Naive thymus-derived CD4-positive, alpha-beta T cell (primary cell): ENCODE measurements at regions of chr12 and their contacts with region 1.

Region 1: DNA sequence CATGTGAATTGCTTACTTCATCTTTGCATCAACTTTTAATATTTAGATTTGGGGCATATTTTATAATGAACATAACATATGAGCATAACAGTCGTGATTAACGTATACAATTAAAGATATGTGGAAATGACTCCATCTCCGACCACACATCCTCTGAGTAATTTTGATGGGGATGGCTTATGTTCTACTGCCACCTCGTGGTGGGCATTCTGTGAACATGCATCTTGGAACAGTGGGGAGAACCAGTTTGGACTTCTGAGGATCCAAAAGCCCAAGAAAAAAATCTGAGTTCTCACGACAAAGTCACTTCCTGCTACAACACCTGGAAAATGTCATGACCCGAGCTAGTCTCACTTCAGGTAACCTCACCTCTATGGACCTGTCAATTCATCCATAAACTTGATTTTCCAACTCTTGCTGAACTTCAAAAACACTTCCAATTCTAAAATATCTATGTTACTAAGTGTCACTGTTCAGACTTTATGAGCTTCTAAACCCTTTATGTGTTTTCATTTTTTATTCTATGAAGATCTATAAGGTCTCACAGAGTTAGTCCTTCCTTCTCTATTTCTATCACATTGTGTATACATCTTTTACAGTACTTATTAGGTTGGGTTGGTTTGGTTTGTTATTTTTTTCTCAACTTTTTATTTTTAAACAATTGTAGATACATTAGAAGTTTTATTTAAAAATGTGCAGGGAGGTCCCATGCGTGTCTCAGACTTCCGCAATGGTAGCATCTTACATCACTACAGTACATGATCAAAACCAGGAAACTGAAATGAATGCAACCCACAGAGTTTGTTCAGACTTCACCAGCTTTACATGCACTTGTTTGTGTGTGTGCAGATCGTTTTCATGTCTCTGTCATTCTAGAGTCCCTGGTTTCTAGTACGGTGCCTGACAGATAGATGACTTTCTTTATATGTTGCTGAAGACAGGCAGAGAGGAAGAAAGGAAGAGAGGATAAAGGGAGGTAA is 38.2 kb upstream of the STAB2 start:
- DNase-seq: peak; percentile 28 to 71 (median 60)
- ATAC-seq: peak; percentile 74
- H3K4me3 ChIP-seq: no peak overlapping the region
- H3K4me3 Mint-ChIP-seq: no peak overlapping the region
- H3K27ac ChIP-seq: no peak overlapping the region
- H3K27ac Mint-ChIP-seq: no peak overlapping the region
- H3K4me1 ChIP-seq: no peaks in the 10 kb centered on the region
- H3K4me1 Mint-ChIP-seq: peaks cover 0 to 5% (median 0%) of the 10 kb centered on the region in 7 donors
- H3K27me3 ChIP-seq: no peaks in the 10 kb centered on the region
- H3K27me3 Mint-ChIP-seq: peaks cover 11 to 35% (median 20%) of the 10 kb centered on the region in 5 donors

Region 2: DNA sequence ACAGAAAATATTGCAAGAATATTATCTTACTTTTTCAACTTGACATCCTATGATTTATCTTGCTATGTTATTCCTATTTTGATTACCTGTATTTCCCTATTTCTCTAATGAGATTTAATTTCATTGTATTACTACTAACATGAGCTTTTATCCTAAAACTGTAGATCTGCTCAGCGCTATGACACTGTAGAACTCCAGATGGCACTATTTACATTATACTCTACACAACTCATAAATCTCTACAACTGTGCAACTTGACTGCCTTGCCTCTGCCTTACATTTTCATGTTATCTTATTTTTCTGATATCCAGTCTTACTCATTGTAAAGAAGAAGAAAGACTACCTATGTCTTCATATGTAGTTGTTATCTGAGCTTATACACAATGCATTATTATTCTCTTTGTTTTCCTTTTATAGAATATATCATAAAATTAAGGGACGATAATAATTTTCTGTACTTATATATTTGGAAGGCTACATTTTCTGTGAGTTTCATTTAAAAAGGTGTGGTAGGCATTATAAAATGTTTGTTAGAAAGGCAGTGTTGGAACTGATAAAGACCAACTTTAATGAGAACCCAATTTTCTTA is 1453.1 kb before region 1 on chr12:
- CTCF ChIA-PET with region 1: no interaction called
- POLR2A ChIA-PET with region 1: no interaction called
- intact Hi-C with region 1: loop called in 1 of 2 experiments (anchors 2 kb)
- DNase-seq: no peak
- ATAC-seq: peak; percentile 56
- H3K4me3 ChIP-seq: no peak overlapping the region
- H3K4me3 Mint-ChIP-seq: no peak overlapping the region
- H3K27ac ChIP-seq: no peak overlapping the region
- H3K27ac Mint-ChIP-seq: no peak overlapping the region
- H3K4me1 ChIP-seq: no peaks in the 10 kb centered on the region
- H3K4me1 Mint-ChIP-seq: peaks cover 0 to 5% (median 3%) of the 10 kb centered on the region in 7 donors
- H3K27me3 ChIP-seq: no peaks in the 10 kb centered on the region
- H3K27me3 Mint-ChIP-seq: no peaks in the 10 kb centered on the region

Region 3: DNA sequence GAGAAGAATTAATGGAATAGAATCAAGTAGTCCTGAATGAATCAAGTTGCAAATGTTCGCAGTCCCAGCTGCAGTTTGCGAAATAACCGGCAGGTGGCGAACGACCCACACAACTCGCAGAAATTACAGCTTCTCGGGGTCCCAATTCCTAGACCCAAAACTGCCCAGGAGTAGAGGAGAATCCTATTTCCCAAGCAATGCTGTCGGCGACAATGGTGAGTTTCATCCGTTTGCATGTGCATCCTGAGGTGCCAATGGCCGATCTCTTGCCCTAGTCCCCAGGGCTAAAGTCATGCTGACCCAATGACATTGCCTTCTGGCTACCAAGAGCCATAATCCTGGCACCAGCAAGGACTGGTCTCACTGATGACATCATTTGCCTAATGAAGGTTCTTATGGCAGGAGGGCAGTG is 600.0 kb before region 1 on chr12:
- CTCF ChIA-PET with region 1: interaction called, 33 read pairs
- POLR2A ChIA-PET with region 1: no interaction called
- intact Hi-C with region 1: loop called (anchors 1 kb)
- DNase-seq: peak in 5 of 9 donors; percentile 31 to 48 (median 43)
- ATAC-seq: no peak
- H3K4me3 ChIP-seq: no peak overlapping the region
- H3K4me3 Mint-ChIP-seq: no peak overlapping the region
- H3K27ac ChIP-seq: no peak overlapping the region
- H3K27ac Mint-ChIP-seq: no peak overlapping the region
- H3K4me1 ChIP-seq: no peaks in the 10 kb centered on the region
- H3K4me1 Mint-ChIP-seq: peaks cover 0 to 14% (median 4%) of the 10 kb centered on the region in 7 donors
- H3K27me3 ChIP-seq: no peaks in the 10 kb centered on the region
- H3K27me3 Mint-ChIP-seq: peaks cover 60 to 74% (median 61%) of the 10 kb centered on the region in 5 donors

Region 4: DNA sequence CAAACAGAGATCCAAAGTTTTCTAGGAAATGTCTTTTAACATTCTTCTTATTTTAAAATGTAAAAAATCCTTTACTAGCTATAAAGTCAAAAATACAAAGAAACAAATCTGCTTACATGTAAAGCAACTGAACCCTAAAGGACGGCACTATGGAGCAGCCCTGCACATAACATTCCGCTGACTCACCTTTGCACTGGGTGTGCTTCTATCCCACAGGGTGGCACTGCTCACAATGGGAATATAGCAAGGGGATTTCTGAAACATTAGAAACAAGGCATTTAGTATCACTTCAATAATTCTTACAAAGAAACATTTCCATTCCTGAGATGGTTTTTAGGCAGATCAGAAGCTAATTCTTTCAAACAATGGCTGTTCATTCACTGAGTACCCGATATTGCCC is 147.5 kb before region 1 on chr12:
- CTCF ChIA-PET with region 1: no interaction called
- POLR2A ChIA-PET with region 1: no interaction called
- intact Hi-C with region 1: loop called in 1 of 2 experiments (anchors 2 kb)
- DNase-seq: peak in 4 of 9 donors; percentile 2 to 42 (median 13)
- ATAC-seq: no peak
- H3K4me3 ChIP-seq: no peak overlapping the region
- H3K4me3 Mint-ChIP-seq: no peak overlapping the region
- H3K27ac ChIP-seq: no peak overlapping the region
- H3K27ac Mint-ChIP-seq: no peak overlapping the region
- H3K4me1 ChIP-seq: no peaks in the 10 kb centered on the region
- H3K4me1 Mint-ChIP-seq: peaks cover 0 to 7% (median 0%) of the 10 kb centered on the region in 7 donors
- H3K27me3 ChIP-seq: no peaks in the 10 kb centered on the region
- H3K27me3 Mint-ChIP-seq: no peaks in the 10 kb centered on the region

Region 5: GRCh38 chr12:103503977-103504376 is 44.9 kb before region 1 on chr12:
- CTCF ChIA-PET with region 1: interaction called, 3 read pairs
- POLR2A ChIA-PET with region 1: no interaction called
- intact Hi-C with region 1: loop called in 1 of 2 experiments (anchors 2 kb)
- DNase-seq: peak; percentile 25 to 72 (median 54)
- ATAC-seq: peak; percentile 85
- H3K4me3 ChIP-seq: no peak overlapping the region
- H3K4me3 Mint-ChIP-seq: no peak overlapping the region
- H3K27ac ChIP-seq: no peak overlapping the region
- H3K27ac Mint-ChIP-seq: peak overlapping the region in 1 of 9 donors; percentile 65
- H3K4me1 ChIP-seq: no peaks in the 10 kb centered on the region
- H3K4me1 Mint-ChIP-seq: peaks cover 0 to 31% (median 0%) of the 10 kb centered on the region in 7 donors
- H3K27me3 ChIP-seq: peaks cover 0 to 4% of the 10 kb centered on the region in 2 donors
- H3K27me3 Mint-ChIP-seq: peaks cover 0 to 14% (median 0%) of the 10 kb centered on the region in 5 donors

Region 6: DNA sequence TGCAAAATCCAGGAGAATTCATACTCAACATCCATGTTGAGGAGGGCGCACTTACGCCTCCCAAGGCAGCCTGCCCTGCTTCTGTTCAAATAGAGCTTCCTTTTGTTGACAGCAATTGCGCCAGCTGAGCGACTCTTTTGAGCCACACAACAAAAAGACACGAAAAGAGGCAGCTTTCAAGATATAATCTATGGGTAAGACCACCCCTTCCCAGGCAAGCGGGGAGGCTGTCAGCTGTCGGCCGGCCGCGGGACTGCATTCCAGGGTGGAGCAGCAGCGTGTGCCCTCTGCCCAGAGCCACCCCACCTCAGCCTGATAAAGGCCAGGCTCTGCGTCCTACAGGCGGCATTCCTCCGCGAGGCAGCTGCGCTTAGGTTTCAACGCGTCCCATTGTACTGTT is 22.4 kb after region 1 on chr12:
- CTCF ChIA-PET with region 1: no interaction called
- POLR2A ChIA-PET with region 1: no interaction called
- intact Hi-C with region 1: no loop called
- DNase-seq: no peak
- ATAC-seq: no peak
- H3K4me3 ChIP-seq: no peak overlapping the region
- H3K4me3 Mint-ChIP-seq: no peak overlapping the region
- H3K27ac ChIP-seq: no peak overlapping the region
- H3K27ac Mint-ChIP-seq: no peak overlapping the region
- H3K4me1 ChIP-seq: no peaks in the 10 kb centered on the region
- H3K4me1 Mint-ChIP-seq: peaks cover 0 to 11% (median 5%) of the 10 kb centered on the region in 7 donors
- H3K27me3 ChIP-seq: no peaks in the 10 kb centered on the region
- H3K27me3 Mint-ChIP-seq: peaks cover 50 to 84% (median 69%) of the 10 kb centered on the region in 5 donors